PC-9 (cell line): ENCODE measurements at regions of chr2 and their contacts with region 1.

Region 1: GRCh38 chr2:9518163-9518562 is 37.5 kb downstream of the ADAM17 start:
- DNase-seq: no peak
- H3K4me3 ChIP-seq: no peak overlapping the region
- H3K27ac ChIP-seq: no peak overlapping the region
- H3K4me1 ChIP-seq: no peaks in the 10 kb centered on the region
- H3K27me3 ChIP-seq: no peaks in the 10 kb centered on the region
- CTCF ChIP-seq: no peak

Region 2: GRCh38 chr2:9549420-9549819 is 31.3 kb after region 1 on chr2:
- CTCF ChIA-PET with region 1: no interaction called
- POLR2A ChIA-PET with region 1: interaction called, 25 read pairs
- intact Hi-C with region 1: no loop called
- DNase-seq: no peak
- H3K4me3 ChIP-seq: no peak overlapping the region
- H3K27ac ChIP-seq: peak overlapping the region; percentile 96
- H3K4me1 ChIP-seq: peaks cover 60% of the 10 kb centered on the region
- H3K27me3 ChIP-seq: no peaks in the 10 kb centered on the region
- CTCF ChIP-seq: no peak